Activated CD8-positive, alpha-beta T cell treated with anti-CD3 and anti-CD28 coated beads, Interleukin-2, amount 10 ng/mL, durations not matched to agents 7 days and 5 days (primary cell): ENCODE measurements at regions of chr1 and their contacts with region 1.

Region 1: DNA sequence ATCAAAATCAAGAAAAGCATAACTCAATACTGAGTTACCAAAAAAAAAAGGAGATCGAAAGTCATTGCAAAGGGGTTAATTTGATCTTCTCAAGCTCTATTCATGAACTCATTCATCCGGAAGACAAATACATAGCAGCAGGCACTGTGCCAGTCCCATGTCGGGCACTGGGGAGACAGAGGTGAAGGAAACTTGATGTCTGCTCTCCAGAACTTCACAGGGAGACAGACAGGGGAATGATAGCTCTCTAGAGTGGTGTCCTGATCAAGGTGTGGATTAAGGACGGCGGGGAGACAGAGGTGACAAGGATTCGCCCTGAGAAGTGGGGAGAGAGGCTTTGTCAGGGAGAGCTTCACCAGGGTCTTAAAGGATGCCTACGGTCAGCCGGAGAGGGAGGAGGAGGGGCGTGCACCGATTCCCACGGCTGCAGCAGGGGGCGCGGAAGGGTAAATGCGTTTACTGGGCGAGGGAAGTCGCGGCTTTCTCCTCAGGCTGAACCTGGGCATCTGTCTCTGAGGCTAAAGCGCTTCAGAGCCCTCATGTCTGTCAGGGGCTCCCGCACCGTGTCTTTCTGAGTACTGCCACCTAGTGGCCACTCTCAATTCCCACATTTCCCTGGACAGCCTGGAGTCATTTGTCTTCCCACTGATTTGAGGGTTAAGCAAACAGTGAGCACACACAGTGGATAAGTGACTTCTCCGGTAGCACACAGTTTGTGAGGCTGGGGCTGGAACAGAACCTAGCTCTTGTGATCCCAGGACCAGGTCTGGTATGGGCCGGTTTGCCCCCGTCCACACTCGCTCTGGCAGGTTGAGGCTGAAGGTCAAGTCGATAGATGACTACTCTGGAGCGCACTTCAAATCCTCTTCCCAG is 152.8 kb downstream of the TENT5C start:
- DNase-seq: peak; percentile 79
- ATAC-seq: peak; percentile 96
- H3K4me3 Mint-ChIP-seq: peak overlapping the region; percentile 67
- H3K27ac Mint-ChIP-seq: peak overlapping the region; percentile 1
- H3K4me1 Mint-ChIP-seq: peaks cover 15% of the 10 kb centered on the region
- H3K27me3 Mint-ChIP-seq: peaks cover 34% of the 10 kb centered on the region

Region 2: DNA sequence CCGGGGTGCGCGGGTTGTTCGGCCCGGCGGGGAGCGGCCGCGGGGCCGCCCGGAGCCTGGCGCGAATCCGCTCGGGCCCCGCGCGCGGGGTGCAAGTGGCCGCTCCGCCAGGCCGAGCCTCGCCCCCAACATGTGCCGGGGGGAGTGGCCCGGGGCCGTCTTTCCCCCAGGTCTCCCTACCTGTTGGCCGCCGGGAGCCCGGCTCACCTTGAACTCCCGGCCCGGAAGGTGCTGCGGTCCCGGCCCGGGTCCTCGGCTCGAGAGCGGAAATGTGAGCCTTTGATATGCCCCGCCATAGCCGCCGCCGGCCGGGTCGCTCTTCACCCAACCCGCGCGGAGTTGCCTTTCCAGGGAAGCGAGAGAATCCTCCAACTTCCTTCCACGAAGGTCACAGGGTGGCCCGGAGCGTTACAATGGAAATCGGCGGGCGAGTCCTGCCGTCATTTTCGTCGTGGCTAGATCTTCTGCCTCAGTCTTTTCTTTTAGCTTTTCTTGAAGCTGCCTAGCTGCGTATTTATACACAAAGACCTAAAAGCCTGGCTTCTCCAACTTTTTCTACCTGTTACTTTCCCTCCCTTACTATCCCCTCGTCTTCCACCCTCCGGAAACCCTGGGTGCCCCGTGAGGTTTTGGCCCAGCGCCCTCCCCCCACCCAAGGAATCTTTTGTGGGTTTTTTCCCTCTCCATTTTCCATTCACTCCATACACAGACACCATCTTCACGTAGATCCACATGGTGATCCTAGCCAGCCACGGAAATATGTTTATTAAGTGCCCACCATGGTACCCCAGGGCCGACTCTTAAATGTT is 848.1 kb before region 1 on chr1:
- CTCF ChIA-PET with region 1: no interaction called
- POLR2A ChIA-PET with region 1: no interaction called
- DNase-seq: peak; percentile 60
- ATAC-seq: peak; percentile 80
- H3K4me3 Mint-ChIP-seq: no peak overlapping the region
- H3K27ac Mint-ChIP-seq: no peak overlapping the region
- H3K4me1 Mint-ChIP-seq: peaks cover 11% of the 10 kb centered on the region
- H3K27me3 Mint-ChIP-seq: peaks cover 8% of the 10 kb centered on the region

Region 3: DNA sequence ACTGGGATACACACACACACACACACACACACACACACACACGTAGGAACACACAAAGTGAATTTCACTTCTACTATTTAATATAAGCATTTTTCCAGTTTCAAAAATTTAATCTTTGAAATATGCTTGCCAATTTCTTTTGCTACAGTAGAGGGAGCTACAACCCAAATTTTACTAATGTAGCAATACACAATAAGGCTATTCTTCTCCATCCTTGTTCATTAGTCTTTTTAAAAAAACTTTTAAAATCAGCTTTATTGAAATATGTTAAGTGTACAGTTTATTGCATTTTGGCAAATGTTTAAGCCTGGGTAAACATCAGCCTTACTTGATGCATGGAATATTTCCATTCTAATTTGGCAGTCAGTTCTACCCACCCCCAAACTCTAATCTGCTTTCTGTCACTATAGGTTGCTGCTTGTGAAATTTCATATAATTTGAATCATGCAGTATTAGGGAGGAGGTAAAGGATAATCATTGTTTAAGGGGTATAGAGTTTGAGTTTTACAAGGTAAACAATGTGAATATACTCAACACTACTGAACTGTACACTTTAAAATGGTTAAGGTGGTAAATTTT is 245.8 kb before region 1 on chr1:
- CTCF ChIA-PET with region 1: interaction called, 139 read pairs
- POLR2A ChIA-PET with region 1: no interaction called
- DNase-seq: no peak
- ATAC-seq: peak; percentile 27
- H3K4me3 Mint-ChIP-seq: no peak overlapping the region
- H3K27ac Mint-ChIP-seq: no peak overlapping the region
- H3K4me1 Mint-ChIP-seq: no peaks in the 10 kb centered on the region
- H3K27me3 Mint-ChIP-seq: no peaks in the 10 kb centered on the region

Region 4: GRCh38 chr1:117605774-117606648 is 152.7 kb before region 1 on chr1 and contains the start of gene TENT5C:
- CTCF ChIA-PET with region 1: interaction called, 11 read pairs
- POLR2A ChIA-PET with region 1: interaction called, 4 read pairs
- DNase-seq: peak; percentile 99
- ATAC-seq: peak; percentile 83
- H3K4me3 Mint-ChIP-seq: peak within 1 kb of the TSS; percentile 97
- H3K27ac Mint-ChIP-seq: peak within 1 kb of the TSS; percentile 94
- H3K4me1 Mint-ChIP-seq: peaks cover 49% of the 10 kb centered on the region
- H3K27me3 Mint-ChIP-seq: peaks cover 13% of the 10 kb centered on the region
- total RNA-seq, gene TENT5C: 20.7 to 20.8 TPM

Region 5: GRCh38 chr1:117674521-117675397 is 83.9 kb before region 1 on chr1:
- CTCF ChIA-PET with region 1: interaction called, 17 read pairs
- POLR2A ChIA-PET with region 1: no interaction called
- DNase-seq: peak; percentile 74
- ATAC-seq: peak; percentile 84
- H3K4me3 Mint-ChIP-seq: no peak overlapping the region
- H3K27ac Mint-ChIP-seq: no peak overlapping the region
- H3K4me1 Mint-ChIP-seq: peaks cover 20% of the 10 kb centered on the region
- H3K27me3 Mint-ChIP-seq: peaks cover 22% of the 10 kb centered on the region

Region 6: DNA sequence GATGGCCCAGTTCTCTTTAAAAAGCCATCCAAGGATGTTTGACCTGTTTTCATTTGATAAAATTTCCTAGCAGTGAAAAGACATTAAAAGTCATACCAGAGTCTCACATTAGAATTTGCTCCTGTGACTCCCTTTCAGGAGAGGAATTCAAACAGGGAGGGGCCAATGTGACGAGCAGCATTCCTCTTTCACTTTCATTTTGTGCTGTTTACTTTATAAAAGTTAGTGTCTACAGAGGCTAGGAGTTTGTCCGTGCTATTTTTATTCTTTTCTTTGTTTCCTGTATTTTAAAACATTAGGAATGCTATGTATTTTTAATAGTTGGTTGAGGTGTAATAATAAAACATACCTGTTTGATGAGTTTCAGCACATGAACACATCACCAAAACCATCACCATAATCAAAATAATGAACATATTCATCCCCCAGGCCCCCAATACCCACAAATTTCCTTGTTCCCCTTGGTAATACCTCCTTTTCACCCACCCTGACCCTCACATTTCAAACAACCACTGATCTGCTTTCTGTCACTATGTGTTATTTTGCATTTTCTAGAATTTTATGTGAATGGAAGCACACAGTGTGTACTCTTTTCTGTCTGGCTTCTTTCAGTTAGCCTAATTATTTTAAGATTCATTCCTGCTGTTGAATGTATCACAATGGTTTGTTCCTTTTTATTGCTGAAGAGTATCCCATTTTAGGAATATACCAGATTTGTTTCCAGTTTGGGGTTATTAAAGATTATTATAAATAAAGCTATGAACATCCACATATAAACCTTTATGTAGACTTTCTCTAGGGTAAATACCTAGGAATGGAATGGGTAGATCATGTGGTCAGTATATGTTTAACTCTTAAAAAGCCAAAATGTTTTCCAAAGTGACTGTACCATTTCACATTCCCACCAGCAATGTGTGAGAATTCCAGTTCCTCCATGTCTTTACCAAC is 23.4 kb before region 1 on chr1:
- CTCF ChIA-PET with region 1: interaction called, 23 read pairs
- POLR2A ChIA-PET with region 1: no interaction called
- DNase-seq: peak; percentile 58
- ATAC-seq: peak; percentile 89
- H3K4me3 Mint-ChIP-seq: peak overlapping the region; percentile 71
- H3K27ac Mint-ChIP-seq: peak overlapping the region; percentile 89
- H3K4me1 Mint-ChIP-seq: peaks cover 9% of the 10 kb centered on the region
- H3K27me3 Mint-ChIP-seq: peaks cover 3% of the 10 kb centered on the region

Region 7: DNA sequence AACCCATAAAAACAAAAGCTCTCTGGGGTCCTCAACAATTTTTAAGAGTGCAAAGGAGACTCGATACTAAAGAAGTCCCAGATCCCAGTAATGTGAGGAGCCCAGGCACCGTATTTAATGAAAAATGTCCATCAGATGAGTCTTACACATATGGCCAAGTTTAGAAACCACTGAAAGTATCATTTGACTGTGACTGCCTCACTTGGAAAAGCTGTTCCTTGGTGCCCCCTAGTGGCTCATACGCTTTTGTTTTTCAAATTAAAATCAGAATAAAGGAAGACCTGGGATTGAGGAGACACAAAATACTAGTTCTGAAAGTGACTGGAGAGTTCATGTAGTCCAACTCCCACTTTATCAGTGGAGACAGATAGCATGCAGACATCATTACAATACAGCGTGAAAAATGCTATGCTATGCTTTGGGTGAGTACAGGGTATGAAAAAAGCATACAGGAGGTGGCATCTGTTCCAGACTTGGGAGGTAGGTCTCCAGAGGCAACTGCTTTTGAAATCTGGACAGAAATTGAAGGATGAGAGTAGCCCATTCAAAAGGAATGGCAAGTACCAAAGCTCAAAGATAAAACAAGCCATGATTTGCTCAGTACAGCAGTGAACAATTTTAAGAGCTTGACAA is 136.9 kb after region 1 on chr1:
- CTCF ChIA-PET with region 1: interaction called, 16 read pairs
- POLR2A ChIA-PET with region 1: no interaction called
- DNase-seq: peak; percentile 77
- ATAC-seq: peak; percentile 72
- H3K4me3 Mint-ChIP-seq: no peak overlapping the region
- H3K27ac Mint-ChIP-seq: no peak overlapping the region
- H3K4me1 Mint-ChIP-seq: no peaks in the 10 kb centered on the region
- H3K27me3 Mint-ChIP-seq: no peaks in the 10 kb centered on the region

Region 8: GRCh38 chr1:118032883-118033282 is 274.2 kb after region 1 on chr1:
- CTCF ChIA-PET with region 1: no interaction called
- POLR2A ChIA-PET with region 1: no interaction called
- DNase-seq: no peak
- ATAC-seq: no peak
- H3K4me3 Mint-ChIP-seq: no peak overlapping the region
- H3K27ac Mint-ChIP-seq: no peak overlapping the region
- H3K4me1 Mint-ChIP-seq: no peaks in the 10 kb centered on the region
- H3K27me3 Mint-ChIP-seq: peaks cover 7% of the 10 kb centered on the region